GM13976 (cell line): ENCODE measurements at regions of chr4 and their contacts with region 1.

Region 1: GRCh38 chr4:112759313-112759712 is 122.4 kb downstream of the LARP7 start:
- DNase-seq: no peak
- CTCF ChIP-seq: no peak

Region 2: GRCh38 chr4:112642526-112642925 is 116.8 kb before region 1 on chr4:
- in situ Hi-C with region 1: loop called (anchors 5 kb)
- DNase-seq: no peak
- CTCF ChIP-seq: no peak

Region 3: GRCh38 chr4:113809311-113809710 is 1050.0 kb after region 1 on chr4:
- in situ Hi-C with region 1: no loop called
- DNase-seq: no peak
- CTCF ChIP-seq: no peak